ENCODE measurements at regions of chr6 and their contacts with region 1.

Region 1: GRCh38 chr6:31485055-31485454 is 12.9 kb upstream of the MICB start:
- DNase-seq: no peak
- ATAC-seq: no peak
- H3K4me3 ChIP-seq: no peak overlapping the region
- H3K27ac ChIP-seq: no peak overlapping the region
- H3K4me1 ChIP-seq: no peaks in the 10 kb centered on the region
- H3K27me3 ChIP-seq: peaks cover 0 to 4% (median 0%) of the 10 kb centered on the region in 9 donors
- CTCF ChIP-seq: no peak
- POLR2A ChIP-seq: no peak

Region 2: GRCh38 chr6:31386977-31387376 is 98.1 kb before region 1 on chr6:
- intact Hi-C with region 1: loop called in 2 of 10 experiments (anchors 5 kb)
- DNase-seq: no peak
- ATAC-seq: peak in 2 of 4 donors; percentile 28 to 45
- H3K4me3 ChIP-seq: no peak overlapping the region
- H3K27ac ChIP-seq: no peak overlapping the region
- H3K4me1 ChIP-seq: no peaks in the 10 kb centered on the region
- H3K27me3 ChIP-seq: no peaks in the 10 kb centered on the region
- CTCF ChIP-seq: no peak
- POLR2A ChIP-seq: no peak

Region 3: GRCh38 chr6:31396422-31397152 is 88.5 kb before region 1 on chr6:
- intact Hi-C with region 1: loop called in 2 of 10 experiments (anchors 5 kb)
- DNase-seq: peak; percentile 70 to 84 (median 82)
- ATAC-seq: peak in 2 of 4 donors; percentile 29 to 62
- H3K4me3 ChIP-seq: no peak overlapping the region
- H3K27ac ChIP-seq: peak overlapping the region in 1 of 12 donors; percentile 4
- H3K4me1 ChIP-seq: peaks cover 0 to 37% (median 22%) of the 10 kb centered on the region in 12 donors
- H3K27me3 ChIP-seq: no peaks in the 10 kb centered on the region
- CTCF ChIP-seq: peak; percentile 76 to 98 (median 90)
- POLR2A ChIP-seq: no peak

Region 4: DNA sequence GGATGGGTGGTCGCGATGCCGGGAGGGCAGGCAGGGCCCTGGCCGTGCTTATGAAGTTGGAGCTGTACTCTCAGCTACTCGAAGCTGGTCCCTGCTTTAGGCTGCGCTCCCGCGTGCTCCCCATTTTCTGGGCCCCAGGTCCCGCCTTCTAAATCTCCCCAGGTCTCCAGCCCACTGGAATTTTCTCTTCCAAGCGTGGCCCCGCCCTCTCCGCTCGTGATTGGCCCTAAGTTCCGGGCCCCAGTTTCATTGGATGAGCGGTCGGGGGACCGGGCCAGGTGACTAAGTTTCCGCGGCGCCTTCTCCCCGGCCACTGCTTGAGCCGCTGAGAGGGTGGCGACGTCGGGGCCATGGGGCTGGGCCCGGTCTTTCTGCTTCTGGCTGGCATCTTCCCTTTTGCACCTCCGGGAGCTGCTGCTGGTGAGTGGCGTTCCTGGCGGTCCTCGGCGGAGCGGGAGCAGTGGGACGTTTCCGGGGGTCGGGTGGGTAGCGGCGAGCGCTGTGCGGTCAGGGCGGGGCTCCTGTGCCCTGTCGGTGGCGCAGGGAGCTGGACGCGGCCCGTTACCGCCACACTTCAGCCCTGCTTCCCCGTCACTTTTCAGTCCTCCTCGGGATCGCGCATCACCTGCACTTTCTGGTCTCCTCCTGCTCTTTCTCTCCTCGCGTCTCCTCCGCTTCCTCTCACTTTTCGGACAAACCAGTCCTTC is 81.6 kb before region 1 on chr6 and contains the start of gene MICA:
- intact Hi-C with region 1: loop called in 1 of 10 experiments (anchors 5 kb)
- DNase-seq: peak; percentile 90 to 93 (median 91)
- ATAC-seq: peak; percentile 54 to 88 (median 68)
- H3K4me3 ChIP-seq: peak within 1 kb of the TSS; percentile 51 to 97 (median 85)
- H3K27ac ChIP-seq: peak within 1 kb of the TSS in 11 of 12 donors; percentile 70 to 100 (median 98)
- H3K4me1 ChIP-seq: peaks cover 7 to 72% (median 59%) of the 10 kb centered on the region in 12 donors
- H3K27me3 ChIP-seq: no peaks in the 10 kb centered on the region
- CTCF ChIP-seq: peak in 1 of 12 donors; percentile 20
- POLR2A ChIP-seq: peak in 1 of 2 donors; percentile 81
- total RNA-seq, gene MICA: 8.9 to 21.0 (median 11.5) TPM

Region 5: DNA sequence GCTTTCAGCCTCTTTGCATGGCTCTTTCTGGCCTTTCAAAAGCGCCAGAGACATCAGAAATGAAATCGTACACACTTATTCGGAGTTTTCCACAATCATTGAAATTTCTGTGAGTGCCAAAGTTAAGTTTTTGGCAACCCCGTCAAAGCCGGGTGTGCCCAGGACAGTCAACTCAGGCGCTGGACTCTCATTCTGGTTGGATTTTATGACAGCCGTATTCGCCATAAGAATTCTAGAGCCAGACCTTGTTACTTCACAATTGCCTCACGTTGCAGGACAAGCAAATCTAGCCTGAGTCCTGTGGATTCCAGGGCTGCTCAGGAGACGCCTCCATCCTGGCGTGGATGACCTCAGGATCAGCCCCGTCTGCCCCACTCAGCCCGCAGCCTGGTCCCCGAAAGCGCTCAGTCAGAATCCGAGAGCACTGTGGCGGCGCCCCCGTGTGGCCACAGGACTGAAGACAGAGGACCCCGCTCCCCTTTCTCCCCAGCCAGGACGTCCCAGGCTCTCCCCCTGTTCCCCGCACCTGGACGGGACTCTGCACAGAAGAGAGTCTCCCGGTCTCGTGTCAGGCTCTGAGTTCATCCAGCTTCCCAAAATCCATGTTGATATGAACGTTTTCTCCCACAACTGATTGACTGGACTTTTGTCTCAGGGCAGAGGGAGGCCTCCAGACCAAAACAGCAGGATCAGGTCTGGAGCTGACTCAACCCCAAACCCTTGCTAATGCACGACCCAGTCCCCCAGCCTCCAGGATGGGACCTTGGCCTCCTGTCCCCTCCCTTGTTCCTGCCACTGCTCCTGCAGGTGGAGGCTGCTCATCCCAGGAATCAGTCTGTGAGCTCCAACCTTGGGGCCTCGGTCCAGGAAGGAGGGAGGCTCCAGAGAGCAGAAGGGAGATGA is 43.4 kb before region 1 on chr6:
- intact Hi-C with region 1: no loop called
- DNase-seq: peak; percentile 77 to 92 (median 84)
- ATAC-seq: peak; percentile 92 to 97 (median 96)
- H3K4me3 ChIP-seq: peak overlapping the region in 9 of 12 donors; percentile 6 to 43 (median 28)
- H3K27ac ChIP-seq: no peak overlapping the region
- H3K4me1 ChIP-seq: peaks cover 0 to 8% (median 2%) of the 10 kb centered on the region in 12 donors
- H3K27me3 ChIP-seq: peaks cover 0 to 10% (median 0%) of the 10 kb centered on the region in 9 donors
- CTCF ChIP-seq: peak; percentile 73 to 91 (median 84)
- POLR2A ChIP-seq: no peak

Region 6: GRCh38 chr6:31729515-31729978 is 244.5 kb after region 1 on chr6:
- intact Hi-C with region 1: no loop called
- DNase-seq: peak; percentile 93 to 95 (median 93)
- ATAC-seq: peak; percentile 89 to 91 (median 89)
- H3K4me3 ChIP-seq: peak overlapping the region; percentile 52 to 95 (median 76)
- H3K27ac ChIP-seq: peak overlapping the region; percentile 70 to 99 (median 97)
- H3K4me1 ChIP-seq: peaks cover 4 to 85% (median 33%) of the 10 kb centered on the region in 12 donors
- H3K27me3 ChIP-seq: no peaks in the 10 kb centered on the region
- CTCF ChIP-seq: peak in 7 of 12 donors; percentile 36 to 76 (median 54)
- POLR2A ChIP-seq: peak in 1 of 2 donors; percentile 57

Measured in heart left ventricle (tissue), 16 donors.